Psoas muscle (tissue), 8 donors: ENCODE measurements at regions of chr1 and their contacts with region 1.

Region 1: DNA sequence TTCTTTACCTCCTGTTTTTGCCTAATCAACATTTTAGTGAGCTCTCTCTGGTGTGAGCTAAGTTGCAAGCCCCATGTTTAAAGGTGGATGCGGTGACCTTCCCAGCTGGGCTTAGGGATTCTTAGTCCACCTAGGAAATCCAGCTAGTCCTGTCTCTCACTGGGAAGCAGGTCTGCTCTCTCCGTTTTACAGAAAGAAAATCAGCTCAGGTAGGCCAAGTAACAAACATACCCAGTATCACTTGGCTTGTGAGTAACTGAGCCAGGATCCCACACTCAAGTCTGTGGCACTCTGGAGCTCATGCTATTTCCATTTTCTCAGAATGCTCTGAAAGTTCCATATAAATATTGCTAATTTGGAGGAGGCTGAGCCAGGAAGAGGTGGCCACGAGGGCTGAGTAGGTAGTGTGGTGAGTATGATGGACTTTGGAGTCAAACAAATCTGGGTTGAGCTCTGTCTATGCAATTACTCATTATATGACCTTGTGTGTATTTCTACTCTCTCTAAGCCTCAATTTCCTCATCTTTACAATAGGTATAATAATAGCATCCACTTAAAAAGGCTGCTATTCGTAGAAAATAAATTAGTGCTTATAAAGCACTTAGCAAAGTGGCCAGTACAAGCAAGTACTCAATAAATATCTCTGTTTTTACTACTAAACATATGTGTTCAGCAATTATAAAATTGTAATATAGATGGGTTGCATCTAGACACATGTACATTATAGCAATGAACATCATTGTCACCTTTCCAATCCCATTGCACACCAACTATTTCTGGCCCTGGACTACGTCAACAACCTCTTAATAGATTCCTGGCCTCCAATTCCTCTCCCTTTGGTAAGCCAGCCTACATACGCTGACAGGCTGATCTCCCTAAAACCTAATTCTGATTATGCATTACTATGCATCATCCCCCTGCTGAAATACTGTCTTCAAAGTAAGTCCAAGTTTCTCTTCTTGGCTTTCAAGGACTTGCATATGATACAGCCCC is 32.7 kb upstream of the DHCR24 start:
- DNase-seq: no peak
- ATAC-seq: peak; percentile 73 to 88 (median 86)
- H3K4me3 ChIP-seq: no peak overlapping the region
- H3K27ac ChIP-seq: peak overlapping the region; percentile 36
- H3K4me1 ChIP-seq: peaks cover 39% of the 10 kb centered on the region
- H3K27me3 ChIP-seq: no peaks in the 10 kb centered on the region
- CTCF ChIP-seq: no peak

Region 2: GRCh38 chr1:54885807-54886723 is 33.6 kb before region 1 on chr1:
- intact Hi-C with region 1: no loop called
- DNase-seq: no peak
- ATAC-seq: peak in 1 of 4 donors; percentile 6
- H3K4me3 ChIP-seq: peak overlapping the region; percentile 81
- H3K27ac ChIP-seq: peak overlapping the region; percentile 78
- H3K4me1 ChIP-seq: peaks cover 32% of the 10 kb centered on the region
- H3K27me3 ChIP-seq: no peaks in the 10 kb centered on the region
- CTCF ChIP-seq: no peak

Region 3: DNA sequence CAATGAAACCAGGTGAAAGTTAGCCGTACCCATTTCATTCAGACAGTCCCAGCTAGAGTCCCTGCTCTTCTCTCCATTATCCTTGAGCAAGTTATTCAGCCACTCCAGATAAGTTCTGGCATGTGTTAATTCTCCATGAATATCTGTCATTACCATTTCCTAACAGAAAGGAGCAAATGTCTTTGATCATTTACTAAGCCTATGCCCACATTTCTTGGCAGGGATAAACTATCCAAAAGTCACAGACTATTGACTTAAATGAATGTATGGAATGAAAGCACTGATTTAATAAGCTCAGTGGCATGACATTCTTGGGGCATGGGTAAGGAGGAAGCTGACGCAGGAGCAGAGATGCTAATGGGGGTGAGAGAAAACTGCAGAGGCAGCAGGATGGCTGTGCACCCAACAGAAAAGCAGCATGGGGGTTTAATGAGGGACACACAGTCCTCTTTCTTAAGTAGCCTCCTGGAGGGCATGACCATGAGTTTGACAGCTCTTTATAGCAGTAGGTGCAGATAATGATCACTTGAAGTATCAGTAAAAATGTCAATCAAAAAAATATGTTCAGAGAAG is 15.1 kb before region 1 on chr1:
- intact Hi-C with region 1: loop called in 1 of 2 experiments (anchors 1 kb)
- DNase-seq: no peak
- ATAC-seq: no peak
- H3K4me3 ChIP-seq: no peak overlapping the region
- H3K27ac ChIP-seq: no peak overlapping the region
- H3K4me1 ChIP-seq: no peaks in the 10 kb centered on the region
- H3K27me3 ChIP-seq: no peaks in the 10 kb centered on the region
- CTCF ChIP-seq: no peak